CD4-positive, alpha-beta T cell (primary cell): ENCODE measurements at regions of chr10 and their contacts with region 1.

Region 1: GRCh38 chr10:14837757-14838581 is at the starts of genes CDNF, HSPA14 and MSANTD7:
- DNase-seq: peak; percentile 97 to 100 (median 99)
- ATAC-seq: peak; percentile 93
- H3K4me3 ChIP-seq: peak within 1 kb of the TSS; percentile 97
- H3K4me3 Mint-ChIP-seq: peak within 1 kb of the TSS; percentile 99
- H3K27ac ChIP-seq: peak within 1 kb of the TSS; percentile 84 to 88
- H3K27ac Mint-ChIP-seq: peak within 1 kb of the TSS; percentile 90
- H3K4me1 ChIP-seq: peaks cover 21% of the 10 kb centered on the region
- H3K4me1 Mint-ChIP-seq: peaks cover 32% of the 10 kb centered on the region
- H3K27me3 ChIP-seq: no peaks in the 10 kb centered on the region
- H3K27me3 Mint-ChIP-seq: no peaks in the 10 kb centered on the region
- CTCF ChIP-seq: no peak
- total RNA-seq, gene CDNF: 3.2 to 3.7 TPM
- total RNA-seq, gene HSPA14: 29.1 to 33.4 TPM
- total RNA-seq, gene MSANTD7: 26.2 to 26.9 TPM

Region 2: DNA sequence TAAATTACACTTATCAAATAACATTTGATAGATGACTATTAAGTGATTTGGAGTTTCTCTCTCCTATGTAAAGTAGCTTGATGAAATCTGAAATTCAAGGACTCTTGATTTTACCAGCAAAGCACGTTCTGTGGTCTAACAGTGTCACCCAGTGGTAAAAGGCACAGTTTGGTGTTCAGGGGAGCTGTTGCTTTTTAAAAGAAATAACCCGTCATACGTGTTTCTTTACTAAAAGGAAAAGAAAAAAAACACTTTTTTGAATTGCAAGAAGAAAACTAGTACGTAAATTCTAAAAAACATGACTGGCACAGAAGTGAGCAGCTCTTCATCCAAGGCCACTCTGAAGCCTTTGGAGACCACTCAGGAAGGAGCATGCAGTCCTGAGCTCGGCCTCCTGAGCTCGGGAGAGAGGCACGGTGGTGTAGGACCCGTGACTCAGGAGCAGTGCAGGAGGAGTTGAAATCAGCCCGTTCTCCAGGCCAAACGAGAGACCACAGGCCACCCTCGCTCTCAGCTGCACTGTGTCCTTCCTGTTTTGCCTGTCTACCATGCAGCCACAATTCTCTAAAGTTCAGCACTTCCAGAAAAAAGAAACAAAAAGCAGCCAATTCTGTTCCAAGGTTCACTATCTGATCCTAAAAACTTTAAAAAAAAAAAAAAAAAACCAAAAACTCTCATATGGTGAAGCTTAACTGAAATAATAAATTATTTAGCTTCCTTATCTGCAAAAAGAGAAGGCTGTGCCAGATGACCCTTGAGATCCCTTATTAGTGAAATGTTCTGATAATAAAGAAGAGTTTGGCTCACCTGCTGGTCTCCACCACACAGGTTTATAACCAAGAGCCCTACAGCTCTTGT is 294.7 kb before region 1 on chr10:
- CTCF ChIA-PET with region 1: interaction called, 8 read pairs
- POLR2A ChIA-PET with region 1: interaction called, 14 read pairs
- intact Hi-C with region 1: no loop called
- DNase-seq: peak in 6 of 14 experiments; percentile 36 to 80 (median 64)
- ATAC-seq: peak; percentile 79
- H3K4me3 ChIP-seq: peak overlapping the region; percentile 17
- H3K4me3 Mint-ChIP-seq: peak overlapping the region; percentile 76
- H3K27ac ChIP-seq: peak overlapping the region; percentile 57 to 66
- H3K27ac Mint-ChIP-seq: peak overlapping the region; percentile 98
- H3K4me1 ChIP-seq: peaks cover 64% of the 10 kb centered on the region
- H3K4me1 Mint-ChIP-seq: peaks cover 96% of the 10 kb centered on the region
- H3K27me3 ChIP-seq: no peaks in the 10 kb centered on the region
- H3K27me3 Mint-ChIP-seq: no peaks in the 10 kb centered on the region
- CTCF ChIP-seq: peak; percentile 41

Region 3: DNA sequence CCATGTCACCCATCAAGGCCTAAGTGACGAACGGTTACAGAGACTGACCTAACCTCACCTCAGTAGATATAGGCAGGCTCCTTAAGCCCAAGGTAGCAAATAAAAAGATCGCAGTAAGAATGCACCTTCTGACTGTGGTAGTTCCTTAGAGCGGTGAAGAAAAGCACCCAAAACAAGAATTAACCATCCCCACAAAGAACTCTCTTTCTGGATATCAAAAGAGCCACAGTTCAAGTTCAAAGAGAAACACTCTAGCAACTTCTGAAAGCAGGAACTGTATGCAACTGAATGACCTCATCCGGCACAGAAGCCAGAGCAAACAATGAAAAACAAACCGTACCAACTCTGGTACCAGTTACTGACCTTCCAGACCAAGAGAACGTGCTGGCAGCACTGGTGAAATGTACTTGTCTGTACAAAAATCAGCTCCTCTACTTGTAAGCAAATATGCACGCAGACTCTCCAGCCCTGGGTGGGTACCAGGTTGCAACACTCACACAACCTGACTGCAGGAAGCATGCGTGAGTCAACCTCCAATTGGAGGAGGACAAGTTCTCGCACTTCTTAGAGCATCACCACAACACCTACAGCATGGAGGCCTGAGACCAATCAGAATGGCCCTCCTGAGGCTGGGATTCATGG is 266.0 kb before region 1 on chr10:
- CTCF ChIA-PET with region 1: no interaction called
- POLR2A ChIA-PET with region 1: interaction called, 37 read pairs
- intact Hi-C with region 1: no loop called
- DNase-seq: peak; percentile 46 to 90 (median 64)
- ATAC-seq: peak; percentile 66
- H3K4me3 ChIP-seq: peak overlapping the region; percentile 65
- H3K4me3 Mint-ChIP-seq: peak overlapping the region; percentile 92
- H3K27ac ChIP-seq: peak overlapping the region; percentile 85 to 93
- H3K27ac Mint-ChIP-seq: peak overlapping the region; percentile 98
- H3K4me1 ChIP-seq: peaks cover 71% of the 10 kb centered on the region
- H3K4me1 Mint-ChIP-seq: peaks cover 96% of the 10 kb centered on the region
- H3K27me3 ChIP-seq: no peaks in the 10 kb centered on the region
- H3K27me3 Mint-ChIP-seq: no peaks in the 10 kb centered on the region
- CTCF ChIP-seq: no peak

Region 4: GRCh38 chr10:14604181-14605142 is 233.5 kb before region 1 on chr10:
- CTCF ChIA-PET with region 1: interaction called, 4 read pairs
- POLR2A ChIA-PET with region 1: interaction called, 9 read pairs
- intact Hi-C with region 1: loop called (anchors 5 kb)
- DNase-seq: peak; percentile 48 to 89 (median 70)
- ATAC-seq: peak; percentile 56
- H3K4me3 ChIP-seq: peak overlapping the region; percentile 65
- H3K4me3 Mint-ChIP-seq: peak overlapping the region; percentile 90
- H3K27ac ChIP-seq: peak overlapping the region in 1 of 2 donors; percentile 26
- H3K27ac Mint-ChIP-seq: peak overlapping the region; percentile 90
- H3K4me1 ChIP-seq: peaks cover 48% of the 10 kb centered on the region
- H3K4me1 Mint-ChIP-seq: peaks cover 57% of the 10 kb centered on the region
- H3K27me3 ChIP-seq: no peaks in the 10 kb centered on the region
- H3K27me3 Mint-ChIP-seq: no peaks in the 10 kb centered on the region
- CTCF ChIP-seq: no peak

Region 5: GRCh38 chr10:14801723-14802122 is 36.2 kb before region 1 on chr10:
- CTCF ChIA-PET with region 1: no interaction called
- POLR2A ChIA-PET with region 1: no interaction called
- intact Hi-C with region 1: no loop called
- DNase-seq: peak in 1 of 14 experiments; percentile 11
- ATAC-seq: no peak
- H3K4me3 ChIP-seq: no peak overlapping the region
- H3K4me3 Mint-ChIP-seq: no peak overlapping the region
- H3K27ac ChIP-seq: no peak overlapping the region
- H3K27ac Mint-ChIP-seq: no peak overlapping the region
- H3K4me1 ChIP-seq: no peaks in the 10 kb centered on the region
- H3K4me1 Mint-ChIP-seq: no peaks in the 10 kb centered on the region
- H3K27me3 ChIP-seq: no peaks in the 10 kb centered on the region
- H3K27me3 Mint-ChIP-seq: no peaks in the 10 kb centered on the region
- CTCF ChIP-seq: no peak

Region 6: GRCh38 chr10:14878266-14879054 is 40.5 kb after region 1 on chr10 and contains the start of gene SUV39H2:
- CTCF ChIA-PET with region 1: no interaction called
- POLR2A ChIA-PET with region 1: interaction called, 63 read pairs
- intact Hi-C with region 1: loop called in 1 of 2 experiments (anchors 1 kb)
- DNase-seq: peak; percentile 74 to 97 (median 90)
- ATAC-seq: peak; percentile 78
- H3K4me3 ChIP-seq: peak within 1 kb of the TSS; percentile 95
- H3K4me3 Mint-ChIP-seq: peak within 1 kb of the TSS; percentile 96
- H3K27ac ChIP-seq: peak within 1 kb of the TSS; percentile 39 to 53
- H3K27ac Mint-ChIP-seq: peak within 1 kb of the TSS; percentile 88
- H3K4me1 ChIP-seq: peaks cover 16% of the 10 kb centered on the region
- H3K4me1 Mint-ChIP-seq: peaks cover 48% of the 10 kb centered on the region
- H3K27me3 ChIP-seq: no peaks in the 10 kb centered on the region
- H3K27me3 Mint-ChIP-seq: no peaks in the 10 kb centered on the region
- CTCF ChIP-seq: no peak
- total RNA-seq, gene SUV39H2: 3.4 to 3.5 TPM

Region 7: DNA sequence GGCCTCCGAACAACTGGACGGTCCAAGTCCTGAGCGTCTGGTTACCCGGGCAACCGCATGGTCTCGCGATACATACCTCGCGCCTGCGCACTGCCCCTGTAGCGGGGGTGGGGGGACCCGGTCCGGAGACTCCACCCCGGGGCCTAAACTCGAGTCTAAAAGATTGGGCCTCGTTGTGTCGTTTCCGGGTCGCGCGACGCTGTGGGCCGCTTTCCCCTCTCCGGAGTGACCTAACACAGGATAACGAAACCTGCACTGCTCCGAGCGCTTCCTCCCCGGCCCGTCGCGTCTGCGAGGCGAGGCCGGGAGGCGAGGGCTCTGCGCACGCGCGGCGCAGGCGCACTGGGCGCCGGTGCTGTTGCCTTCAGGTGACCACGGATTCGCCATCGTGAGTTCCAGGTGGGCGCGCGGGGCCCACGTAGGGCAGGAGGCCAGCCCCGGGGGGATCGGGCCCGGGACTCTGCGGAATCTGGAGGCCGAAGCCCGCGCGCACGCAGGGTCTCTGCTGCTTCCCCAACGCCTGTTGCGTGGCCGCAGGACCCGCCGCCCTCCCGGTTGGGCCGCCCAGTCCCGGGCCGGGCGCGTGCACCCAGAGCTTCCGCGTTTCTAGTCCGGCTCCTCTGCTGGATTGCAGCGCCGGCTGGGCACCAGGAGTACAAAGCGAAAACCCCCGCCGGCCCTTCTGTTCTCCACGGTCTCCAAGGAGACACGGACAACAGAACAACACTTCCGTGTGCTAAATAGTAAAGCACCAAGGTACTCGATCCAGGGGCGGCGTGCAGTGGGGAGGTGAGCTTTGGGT is 259.2 kb after region 1 on chr10 and contains the start of gene RPP38:
- CTCF ChIA-PET with region 1: no interaction called
- POLR2A ChIA-PET with region 1: interaction called, 4 read pairs
- intact Hi-C with region 1: loop called in 1 of 2 experiments (anchors 10 kb)
- DNase-seq: peak; percentile 89 to 97 (median 92)
- ATAC-seq: peak; percentile 80
- H3K4me3 ChIP-seq: peak within 1 kb of the TSS; percentile 80
- H3K4me3 Mint-ChIP-seq: peak within 1 kb of the TSS; percentile 95
- H3K27ac ChIP-seq: peak within 1 kb of the TSS; percentile 89 to 95
- H3K27ac Mint-ChIP-seq: peak within 1 kb of the TSS; percentile 97
- H3K4me1 ChIP-seq: peaks cover 43% of the 10 kb centered on the region
- H3K4me1 Mint-ChIP-seq: peaks cover 38% of the 10 kb centered on the region
- H3K27me3 ChIP-seq: no peaks in the 10 kb centered on the region
- H3K27me3 Mint-ChIP-seq: no peaks in the 10 kb centered on the region
- CTCF ChIP-seq: no peak
- total RNA-seq, gene RPP38: 12.9 to 14.9 TPM